ENCODE measurements at regions of chr5 and their contacts with region 1.

Region 1: GRCh38 chr5:80141147-80141671 is 106.1 kb downstream of the THBS4 start:
- DNase-seq: no peak
- H3K4me3 ChIP-seq: no peak overlapping the region
- H3K4me3 Mint-ChIP-seq: peak overlapping the region in 7 of 8 donors; percentile 18 to 82 (median 60)
- H3K27ac ChIP-seq: peak overlapping the region; percentile 37
- H3K27ac Mint-ChIP-seq: peak overlapping the region; percentile 89 to 96 (median 95)
- H3K4me1 ChIP-seq: peaks cover 86% of the 10 kb centered on the region
- H3K4me1 Mint-ChIP-seq: peaks cover 65 to 82% (median 75%) of the 10 kb centered on the region in 4 donors
- H3K27me3 ChIP-seq: no peaks in the 10 kb centered on the region
- H3K27me3 Mint-ChIP-seq: no peaks in the 10 kb centered on the region

Region 2: DNA sequence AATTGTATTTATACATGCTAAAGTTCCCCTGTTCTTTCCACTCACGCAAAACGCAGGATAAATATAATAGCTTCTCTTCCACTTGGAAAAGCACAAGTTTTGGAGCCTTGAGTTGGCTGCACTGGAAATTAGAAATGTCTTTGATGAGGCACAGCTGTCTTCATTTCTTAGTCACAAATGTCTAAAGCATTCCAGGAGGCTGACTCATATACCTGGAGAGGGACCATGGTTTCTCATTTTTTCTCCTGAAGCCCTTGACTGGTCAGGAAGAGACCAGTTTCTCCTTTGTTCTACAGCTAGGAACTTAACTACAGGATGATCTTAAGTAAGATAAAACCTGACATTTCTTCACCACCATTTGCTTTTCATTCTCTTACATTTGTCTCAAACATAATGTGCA is 166.3 kb before region 1 on chr5:
- CTCF ChIA-PET with region 1: no interaction called
- POLR2A ChIA-PET with region 1: no interaction called
- intact Hi-C with region 1: no loop called
- DNase-seq: no peak
- H3K4me3 ChIP-seq: no peak overlapping the region
- H3K4me3 Mint-ChIP-seq: no peak overlapping the region
- H3K27ac ChIP-seq: no peak overlapping the region
- H3K27ac Mint-ChIP-seq: no peak overlapping the region
- H3K4me1 ChIP-seq: no peaks in the 10 kb centered on the region
- H3K4me1 Mint-ChIP-seq: peaks cover 0 to 2% (median 0%) of the 10 kb centered on the region in 4 donors
- H3K27me3 ChIP-seq: no peaks in the 10 kb centered on the region
- H3K27me3 Mint-ChIP-seq: peaks cover 3 to 5% of the 10 kb centered on the region in 2 donors

Region 3: DNA sequence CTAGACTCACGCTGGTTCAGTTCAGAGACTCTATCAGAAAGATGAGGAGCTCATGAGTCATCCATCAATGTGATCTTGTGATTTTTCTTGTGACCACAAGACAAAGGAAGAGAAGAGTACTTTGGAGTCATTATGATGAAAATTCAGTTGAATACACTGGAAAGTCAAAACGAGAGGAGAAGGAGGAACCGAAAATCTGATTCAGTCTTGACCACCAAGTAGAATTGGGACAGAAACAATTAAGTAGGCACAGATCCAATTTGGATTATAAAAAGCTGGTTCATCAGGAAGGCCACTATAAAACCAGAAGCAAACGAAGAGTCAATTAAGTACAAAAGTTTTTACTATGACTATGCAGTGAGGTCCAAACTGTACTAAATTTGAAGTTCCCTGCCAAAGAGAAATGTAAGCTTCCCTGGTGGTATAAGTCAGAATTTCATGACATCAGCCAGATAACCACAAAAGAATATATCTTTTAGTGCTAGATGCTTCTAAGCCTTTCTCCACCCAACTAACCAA is 15.2 kb before region 1 on chr5:
- CTCF ChIA-PET with region 1: interaction called, 13 read pairs
- POLR2A ChIA-PET with region 1: interaction called, 31 read pairs
- intact Hi-C with region 1: loop called (anchors 1 kb)
- DNase-seq: peak in 1 of 5 donors; percentile 33
- H3K4me3 ChIP-seq: no peak overlapping the region
- H3K4me3 Mint-ChIP-seq: peak overlapping the region in 7 of 8 donors; percentile 8 to 82 (median 44)
- H3K27ac ChIP-seq: no peak overlapping the region
- H3K27ac Mint-ChIP-seq: peak overlapping the region; percentile 10 to 85 (median 64)
- H3K4me1 ChIP-seq: peaks cover 37% of the 10 kb centered on the region
- H3K4me1 Mint-ChIP-seq: peaks cover 47 to 67% (median 55%) of the 10 kb centered on the region in 4 donors
- H3K27me3 ChIP-seq: no peaks in the 10 kb centered on the region
- H3K27me3 Mint-ChIP-seq: no peaks in the 10 kb centered on the region

Region 4: DNA sequence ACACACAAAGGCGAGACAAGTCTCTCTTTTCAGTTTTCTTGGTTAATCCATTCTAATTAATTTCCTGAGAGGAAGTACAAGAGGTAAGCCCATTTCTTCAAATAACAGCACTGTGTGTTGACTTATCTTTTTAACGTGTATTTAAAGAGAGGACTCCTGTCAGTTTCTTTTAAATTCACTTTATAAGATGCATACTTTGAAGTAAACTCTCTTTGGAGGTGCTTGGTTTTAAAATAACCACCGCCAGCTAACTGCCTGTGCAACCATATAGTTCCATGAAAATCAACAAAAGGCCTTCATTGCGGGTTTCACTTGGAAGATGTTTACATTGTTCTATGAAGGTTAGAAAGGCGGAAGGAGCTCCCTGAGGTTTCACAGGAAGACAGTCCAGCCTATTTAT is 127.7 kb after region 1 on chr5:
- CTCF ChIA-PET with region 1: interaction called, 3 read pairs
- POLR2A ChIA-PET with region 1: interaction called, 8 read pairs
- intact Hi-C with region 1: loop called (anchors 5 kb)
- DNase-seq: no peak
- H3K4me3 ChIP-seq: no peak overlapping the region
- H3K4me3 Mint-ChIP-seq: peak overlapping the region in 7 of 8 donors; percentile 36 to 87 (median 61)
- H3K27ac ChIP-seq: peak overlapping the region; percentile 9
- H3K27ac Mint-ChIP-seq: peak overlapping the region; percentile 77 to 99 (median 92)
- H3K4me1 ChIP-seq: peaks cover 34% of the 10 kb centered on the region
- H3K4me1 Mint-ChIP-seq: peaks cover 28 to 48% (median 39%) of the 10 kb centered on the region in 4 donors
- H3K27me3 ChIP-seq: no peaks in the 10 kb centered on the region
- H3K27me3 Mint-ChIP-seq: no peaks in the 10 kb centered on the region

Measured in CD4-positive, alpha-beta memory T cell (primary cell).